Left ventricle myocardium superior (tissue), 1 donor: ENCODE measurements at regions of chr10 and their contacts with region 1.

Region 1: DNA sequence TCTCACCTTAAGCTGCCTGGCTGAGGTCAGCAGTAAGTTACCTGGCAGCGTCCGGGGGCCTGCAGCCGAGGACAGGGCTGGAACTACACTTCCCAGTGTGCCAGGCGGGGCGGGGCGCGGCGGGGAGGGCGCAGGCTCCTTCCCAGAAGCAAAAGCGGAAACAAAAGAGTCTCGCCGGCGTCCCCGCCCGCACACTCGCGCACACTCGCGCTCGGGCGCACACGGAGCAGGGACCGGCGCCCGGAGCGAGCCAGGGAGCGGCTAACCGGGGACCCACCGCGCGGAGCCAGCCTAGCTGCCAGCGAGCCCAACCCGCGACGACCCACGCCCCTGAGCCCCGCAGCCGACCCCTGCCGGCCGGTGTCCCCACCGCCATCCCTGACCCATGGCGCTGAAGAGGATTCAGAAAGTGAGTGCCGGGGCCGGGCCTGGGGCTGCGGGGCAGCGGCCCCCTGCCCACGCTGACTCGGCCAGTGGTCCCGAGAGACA is at the start of gene UBE2D1:
- DNase-seq: peak; percentile 96
- ATAC-seq: peak; percentile 97
- total RNA-seq, gene UBE2D1: 68.2 TPM

Region 2: DNA sequence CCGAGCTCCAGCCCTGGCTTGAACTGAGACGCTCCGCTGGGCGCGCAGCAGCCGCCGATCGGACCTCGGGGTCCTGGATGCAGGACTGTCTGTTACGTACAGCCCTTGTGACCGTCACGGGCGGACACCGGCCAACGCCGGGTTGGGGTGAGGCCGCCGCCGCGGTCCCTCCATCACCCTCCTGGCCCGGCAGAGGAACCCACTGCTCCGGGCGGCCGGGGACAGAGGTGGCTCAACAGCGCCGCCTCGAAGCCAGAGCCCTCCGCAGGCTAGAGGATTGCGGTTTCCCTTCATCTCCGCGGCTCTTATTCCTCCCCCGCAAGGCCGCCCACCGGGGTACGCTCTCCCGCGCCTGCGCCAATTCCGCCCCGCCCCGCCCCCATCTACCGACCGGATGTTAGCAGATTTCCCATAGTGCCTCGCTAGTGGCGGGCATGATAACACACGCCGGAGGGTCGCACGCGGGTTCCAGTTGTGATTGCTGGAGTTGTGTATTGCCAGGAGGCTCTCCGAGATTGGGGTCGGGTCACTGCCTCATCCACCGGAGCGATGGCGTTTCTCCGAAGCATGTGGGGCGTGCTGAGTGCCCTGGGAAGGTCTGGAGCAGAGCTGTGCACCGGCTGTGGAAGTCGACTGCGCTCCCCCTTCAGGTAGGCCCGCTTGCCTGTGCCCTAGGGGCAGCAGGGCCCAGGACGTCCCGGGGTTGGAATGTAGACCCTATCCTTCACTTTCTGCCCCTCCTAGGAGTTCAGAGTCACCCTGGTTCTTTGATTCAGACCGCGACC is 50.3 kb after region 1 on chr10 and contains the start of gene TFAM:
- intact Hi-C with region 1: loop called (anchors 10 kb)
- DNase-seq: peak; percentile 98
- ATAC-seq: peak; percentile 99
- total RNA-seq, gene TFAM: 33.2 TPM